ENCODE measurements at regions of chr2 and their contacts with region 1.

Region 1: GRCh38 chr2:75324133-75324532 is 124.8 kb upstream of the TACR1 start:
- DNase-seq: no peak
- ATAC-seq: no peak
- H3K4me3 ChIP-seq: no peak overlapping the region
- H3K27ac ChIP-seq: peak overlapping the region in 1 of 12 donors; percentile 1
- H3K4me1 ChIP-seq: peaks cover 0 to 10% (median 0%) of the 10 kb centered on the region in 12 donors
- H3K27me3 ChIP-seq: no peaks in the 10 kb centered on the region
- CTCF ChIP-seq: no peak
- POLR2A ChIP-seq: no peak

Region 2: GRCh38 chr2:75074228-75074627 is 249.9 kb before region 1 on chr2:
- intact Hi-C with region 1: loop called in 1 of 10 experiments (anchors 5 kb)
- DNase-seq: no peak
- ATAC-seq: no peak
- H3K4me3 ChIP-seq: no peak overlapping the region
- H3K27ac ChIP-seq: no peak overlapping the region
- H3K4me1 ChIP-seq: no peaks in the 10 kb centered on the region
- H3K27me3 ChIP-seq: no peaks in the 10 kb centered on the region
- CTCF ChIP-seq: no peak
- POLR2A ChIP-seq: no peak

Region 3: DNA sequence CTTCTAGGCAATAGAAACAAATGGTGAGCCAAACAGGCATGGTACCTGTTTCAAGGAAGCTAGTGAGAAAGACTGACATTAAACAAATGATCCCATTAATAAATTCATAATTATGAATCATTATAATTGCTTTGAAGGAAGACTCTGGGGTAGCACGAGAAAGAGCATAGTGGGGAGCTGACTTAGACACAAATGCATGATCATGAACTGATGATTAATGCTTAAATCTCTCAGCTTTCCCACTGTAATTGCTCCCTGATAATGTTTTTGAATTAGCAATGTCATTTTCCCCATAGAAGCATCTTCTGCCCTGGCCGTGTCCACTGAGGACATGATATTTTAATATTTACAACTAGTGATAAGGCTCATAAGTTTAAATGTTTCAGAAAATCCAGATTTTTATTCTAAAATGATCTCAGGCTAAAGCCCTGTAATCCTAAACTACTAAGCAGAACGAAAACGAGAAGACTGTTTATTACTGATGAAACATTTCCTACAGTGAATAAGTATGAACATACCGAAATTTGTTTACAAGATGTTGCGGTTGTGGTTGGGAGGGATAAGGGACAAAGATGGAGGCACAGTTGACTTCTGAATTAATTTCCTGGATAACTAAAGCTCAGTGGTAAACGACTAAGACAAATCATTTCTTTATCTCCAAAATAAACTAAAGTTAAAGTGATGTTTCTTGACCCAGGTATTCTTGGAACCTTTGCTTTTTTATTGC is 77.5 kb before region 1 on chr2:
- intact Hi-C with region 1: no loop called
- DNase-seq: no peak
- ATAC-seq: no peak
- H3K4me3 ChIP-seq: no peak overlapping the region
- H3K27ac ChIP-seq: no peak overlapping the region
- H3K4me1 ChIP-seq: no peaks in the 10 kb centered on the region
- H3K27me3 ChIP-seq: no peaks in the 10 kb centered on the region
- CTCF ChIP-seq: no peak
- POLR2A ChIP-seq: no peak

Region 4: GRCh38 chr2:75287624-75288316 is 36.4 kb before region 1 on chr2:
- intact Hi-C with region 1: loop called in 1 of 10 experiments (anchors 2 kb)
- DNase-seq: no peak
- ATAC-seq: no peak
- H3K4me3 ChIP-seq: no peak overlapping the region
- H3K27ac ChIP-seq: no peak overlapping the region
- H3K4me1 ChIP-seq: peaks cover 0 to 12% (median 0%) of the 10 kb centered on the region in 12 donors
- H3K27me3 ChIP-seq: peaks cover 0 to 5% (median 0%) of the 10 kb centered on the region in 9 donors
- CTCF ChIP-seq: no peak
- POLR2A ChIP-seq: no peak

Region 5: GRCh38 chr2:75450068-75450467 is 125.9 kb after region 1 on chr2:
- intact Hi-C with region 1: no loop called
- DNase-seq: no peak
- ATAC-seq: no peak
- H3K4me3 ChIP-seq: no peak overlapping the region
- H3K27ac ChIP-seq: no peak overlapping the region
- H3K4me1 ChIP-seq: no peaks in the 10 kb centered on the region
- H3K27me3 ChIP-seq: no peaks in the 10 kb centered on the region
- CTCF ChIP-seq: no peak
- POLR2A ChIP-seq: no peak

Measured in heart left ventricle (tissue), 16 donors.